ENCODE measurements at regions of chr10 and their contacts with region 1.

Region 1: DNA sequence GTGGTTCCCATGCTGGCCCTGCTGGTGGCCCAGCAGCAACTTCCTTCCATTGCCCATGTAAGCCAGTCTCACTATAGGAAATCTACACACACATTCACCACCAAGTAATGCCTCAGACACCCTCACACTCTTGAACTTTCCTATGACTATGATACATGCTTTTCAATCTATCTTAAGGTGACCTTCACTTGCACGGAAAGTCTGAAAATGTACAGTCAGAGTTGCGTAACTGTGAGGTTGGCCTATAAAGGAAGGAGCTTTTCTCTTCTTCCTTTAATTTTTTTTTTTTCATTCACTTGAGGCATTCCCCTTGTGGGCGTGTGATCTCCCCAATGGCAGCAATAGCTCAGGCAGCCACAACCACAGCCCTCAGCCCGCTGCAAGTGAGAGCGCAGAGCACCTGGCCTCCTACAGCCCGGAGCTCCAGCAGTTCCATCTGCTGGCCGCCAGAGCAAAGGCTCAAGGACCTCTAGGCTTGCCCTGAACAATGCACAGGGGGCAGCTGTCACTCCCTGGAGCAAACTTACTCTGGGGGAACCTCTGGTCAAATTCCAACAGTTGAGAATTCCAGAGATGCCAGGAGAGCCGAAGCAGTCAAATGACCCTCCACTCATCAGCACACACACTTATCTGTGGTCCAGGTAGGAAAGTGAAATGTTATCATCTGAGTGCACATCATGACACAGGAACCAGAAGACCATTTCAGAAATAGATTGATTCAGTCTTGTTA is 123.1 kb upstream of the ADO start:
- DNase-seq: peak; percentile 86
- ATAC-seq: peak; percentile 90
- H3K4me3 Mint-ChIP-seq: no peak overlapping the region
- H3K27ac Mint-ChIP-seq: peak overlapping the region; percentile 0
- H3K4me1 Mint-ChIP-seq: peaks cover 30% of the 10 kb centered on the region
- H3K27me3 Mint-ChIP-seq: peaks cover 16% of the 10 kb centered on the region

Region 2: DNA sequence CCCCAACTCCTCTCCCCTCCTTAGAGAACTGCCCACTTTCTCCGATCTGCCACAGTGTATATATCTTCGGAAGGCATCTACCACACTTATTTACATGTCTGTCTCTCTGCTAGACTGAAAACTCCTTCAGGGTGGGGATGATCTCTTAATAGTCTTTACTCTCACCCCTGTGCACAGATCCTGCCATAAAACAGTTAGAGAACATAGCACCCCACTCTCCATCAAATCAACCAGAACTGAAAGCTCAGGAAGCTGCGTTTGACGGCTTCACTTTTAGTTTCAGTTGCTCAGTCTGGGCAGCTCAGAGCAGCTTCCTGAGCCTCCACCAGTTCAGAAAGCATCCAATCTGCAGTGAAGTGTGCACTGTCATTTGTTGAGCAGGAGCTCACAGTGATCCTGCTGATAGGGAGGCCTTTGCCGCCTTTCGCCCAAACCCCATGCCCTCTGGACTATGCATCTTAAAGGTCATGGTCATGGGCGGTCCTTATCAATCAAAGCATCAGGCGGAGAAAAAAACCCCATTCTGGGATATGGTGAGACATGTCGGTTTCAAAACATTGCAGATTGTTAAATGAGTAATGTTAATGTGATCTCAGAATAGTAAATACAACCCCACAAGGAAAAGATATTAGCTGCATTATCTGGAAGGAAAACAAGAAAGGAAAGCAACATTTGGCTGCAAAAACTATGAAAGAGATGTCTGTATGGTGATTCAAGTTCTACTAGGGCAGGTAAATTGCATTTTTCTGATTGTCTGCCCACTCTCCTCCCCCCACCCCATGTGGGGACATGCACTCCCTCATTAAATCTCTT is 43.9 kb before region 1 on chr10:
- CTCF ChIA-PET with region 1: interaction called, 11 read pairs
- DNase-seq: peak; percentile 87
- ATAC-seq: peak; percentile 96
- H3K4me3 Mint-ChIP-seq: no peak overlapping the region
- H3K27ac Mint-ChIP-seq: no peak overlapping the region
- H3K4me1 Mint-ChIP-seq: peaks cover 11% of the 10 kb centered on the region
- H3K27me3 Mint-ChIP-seq: peaks cover 3% of the 10 kb centered on the region

Region 3: GRCh38 chr10:62732841-62733653 is 51.7 kb after region 1 on chr10:
- CTCF ChIA-PET with region 1: interaction called, 12 read pairs
- DNase-seq: peak; percentile 78
- ATAC-seq: peak; percentile 90
- H3K4me3 Mint-ChIP-seq: no peak overlapping the region
- H3K27ac Mint-ChIP-seq: no peak overlapping the region
- H3K4me1 Mint-ChIP-seq: peaks cover 21% of the 10 kb centered on the region
- H3K27me3 Mint-ChIP-seq: peaks cover 26% of the 10 kb centered on the region